AG04449 (cell line): ENCODE measurements at regions of chr6 and their contacts with region 1.

Region 1: DNA sequence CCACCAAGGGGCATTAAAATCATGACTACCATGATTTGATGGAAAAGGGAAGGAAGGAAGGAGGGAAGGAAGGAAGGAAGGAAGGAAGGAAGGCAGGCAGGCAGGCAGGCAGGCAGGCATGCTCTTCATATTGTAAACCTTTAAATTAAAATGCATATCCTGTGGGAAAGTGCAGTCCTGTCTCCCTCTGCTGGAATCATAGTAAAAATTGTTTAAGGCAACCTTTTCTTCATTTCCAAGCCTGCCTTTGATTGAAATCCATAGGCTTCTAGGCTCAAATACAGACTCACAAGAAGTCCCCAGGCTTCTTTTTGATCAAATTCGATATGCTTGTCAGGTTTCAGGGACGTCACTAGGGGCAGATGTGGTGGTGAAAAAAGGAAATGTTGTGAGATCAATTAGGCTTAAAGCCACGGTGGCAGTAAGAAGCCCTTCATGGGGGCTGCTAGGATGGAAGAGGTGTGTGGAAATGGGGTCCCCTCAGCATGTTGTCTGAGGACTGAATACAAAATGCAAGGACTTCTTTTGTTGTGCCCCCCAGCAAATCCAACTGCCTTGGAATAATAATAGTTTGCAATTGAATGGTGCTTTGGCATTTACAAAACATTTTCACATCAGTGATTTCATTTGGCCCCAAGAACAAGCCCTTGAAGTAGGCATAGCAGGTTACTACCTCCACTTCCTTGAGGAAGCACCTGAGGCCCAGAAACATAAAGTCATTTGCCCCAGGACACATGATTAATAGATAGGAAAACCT is 25.6 kb upstream of the GABRR1 start:
- DNase-seq: peak; percentile 28
- H3K4me3 ChIP-seq: no peak overlapping the region
- CTCF ChIP-seq: peak; percentile 34

Region 2: GRCh38 chr6:88919032-88919431 is 323.7 kb before region 1 on chr6:
- CTCF ChIA-PET with region 1: no interaction called
- POLR2A ChIA-PET with region 1: no interaction called
- DNase-seq: no peak
- H3K4me3 ChIP-seq: no peak overlapping the region
- CTCF ChIP-seq: peak; percentile 12

Region 3: DNA sequence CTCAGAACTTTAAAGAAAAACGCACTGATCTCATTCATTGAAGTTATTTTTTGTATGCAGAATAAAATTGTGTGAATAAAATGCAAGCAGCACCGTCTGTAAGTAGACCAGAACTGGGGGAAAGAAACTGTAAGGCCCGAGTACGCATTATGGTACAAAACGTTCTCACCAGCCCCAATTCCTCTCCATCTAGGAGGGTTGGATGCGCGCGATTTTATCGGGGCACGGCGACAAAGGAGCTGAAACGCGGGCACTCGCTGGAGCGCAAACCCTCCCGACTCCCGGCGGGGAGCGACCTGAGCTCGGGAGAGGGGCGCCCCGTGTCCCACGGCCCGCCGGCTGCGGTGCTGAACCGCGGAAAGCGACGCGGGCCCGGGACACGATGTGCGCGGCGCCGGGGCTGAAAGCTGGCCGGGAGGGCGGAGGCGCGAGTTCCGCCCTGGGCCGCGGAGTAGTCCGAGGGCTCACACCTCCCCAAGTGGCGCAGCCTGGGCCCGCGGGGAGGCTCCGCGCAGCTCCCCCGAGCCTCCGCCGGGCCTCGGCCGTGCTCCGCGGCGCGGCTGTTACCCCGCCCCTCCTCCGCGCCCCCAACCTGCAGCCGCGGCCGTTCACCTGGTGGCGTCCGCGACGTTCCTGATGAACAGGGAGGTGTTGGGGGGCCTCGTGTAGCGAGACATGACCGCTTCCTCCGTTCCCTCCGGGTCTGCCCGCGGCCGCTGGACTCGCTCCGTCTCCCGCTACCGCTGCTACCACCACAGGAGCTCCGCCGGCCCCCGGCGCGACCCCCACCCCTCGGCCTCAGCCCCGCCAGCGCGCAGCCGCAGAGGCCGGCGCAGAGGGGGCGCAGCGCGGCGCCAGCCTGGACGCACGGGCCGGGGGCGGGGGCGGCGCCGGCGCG is 125.3 kb before region 1 on chr6 and contains the start of gene SRSF12:
- CTCF ChIA-PET with region 1: interaction called, 88 read pairs
- POLR2A ChIA-PET with region 1: no interaction called
- DNase-seq: no peak
- H3K4me3 ChIP-seq: peak within 1 kb of the TSS; percentile 57
- CTCF ChIP-seq: no peak

Region 4: DNA sequence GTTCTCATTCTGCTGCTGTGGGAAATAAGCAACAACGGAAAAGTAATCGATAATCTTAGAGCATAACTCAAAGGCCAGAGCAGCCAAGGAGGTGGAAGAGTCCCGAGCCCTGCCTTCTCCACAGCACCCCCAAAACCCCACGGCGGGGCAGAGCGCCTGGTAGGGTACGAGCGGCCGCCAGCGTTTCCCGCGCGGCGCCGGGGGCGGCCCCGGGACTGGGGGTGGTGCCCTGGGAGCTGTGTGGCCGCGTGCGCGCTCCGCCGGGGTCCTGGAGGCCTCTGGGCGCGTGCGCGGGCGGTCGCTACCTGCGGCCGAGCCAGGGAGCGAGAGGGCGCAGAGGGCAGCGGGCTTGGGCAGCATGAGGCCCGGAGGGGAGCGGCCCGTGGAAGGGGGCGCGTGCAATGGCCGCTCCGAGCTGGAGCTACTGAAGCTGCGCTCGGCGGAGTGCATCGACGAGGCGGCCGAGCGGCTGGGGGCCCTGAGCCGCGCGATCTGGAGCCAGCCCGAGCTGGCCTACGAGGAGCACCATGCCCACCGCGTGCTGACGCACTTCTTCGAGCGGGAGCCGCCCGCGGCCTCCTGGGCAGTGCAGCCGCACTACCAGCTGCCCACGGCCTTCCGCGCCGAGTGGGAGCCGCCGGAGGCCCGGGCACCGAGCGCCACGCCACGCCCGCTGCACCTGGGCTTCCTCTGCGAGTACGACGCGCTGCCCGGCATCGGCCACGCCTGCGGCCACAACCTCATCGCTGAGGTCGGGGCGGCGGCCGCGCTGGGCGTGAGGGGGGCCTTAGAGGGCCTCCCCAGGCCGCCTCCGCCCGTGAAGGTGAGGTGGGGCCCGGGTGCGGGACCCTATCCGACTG is 96.7 kb before region 1 on chr6 and contains the start of gene PM20D2:
- CTCF ChIA-PET with region 1: interaction called, 16 read pairs
- POLR2A ChIA-PET with region 1: no interaction called
- DNase-seq: no peak
- H3K4me3 ChIP-seq: peak within 1 kb of the TSS; percentile 65
- CTCF ChIP-seq: no peak